ENCODE measurements at regions of chr1 and their contacts with region 1.

Region 1: DNA sequence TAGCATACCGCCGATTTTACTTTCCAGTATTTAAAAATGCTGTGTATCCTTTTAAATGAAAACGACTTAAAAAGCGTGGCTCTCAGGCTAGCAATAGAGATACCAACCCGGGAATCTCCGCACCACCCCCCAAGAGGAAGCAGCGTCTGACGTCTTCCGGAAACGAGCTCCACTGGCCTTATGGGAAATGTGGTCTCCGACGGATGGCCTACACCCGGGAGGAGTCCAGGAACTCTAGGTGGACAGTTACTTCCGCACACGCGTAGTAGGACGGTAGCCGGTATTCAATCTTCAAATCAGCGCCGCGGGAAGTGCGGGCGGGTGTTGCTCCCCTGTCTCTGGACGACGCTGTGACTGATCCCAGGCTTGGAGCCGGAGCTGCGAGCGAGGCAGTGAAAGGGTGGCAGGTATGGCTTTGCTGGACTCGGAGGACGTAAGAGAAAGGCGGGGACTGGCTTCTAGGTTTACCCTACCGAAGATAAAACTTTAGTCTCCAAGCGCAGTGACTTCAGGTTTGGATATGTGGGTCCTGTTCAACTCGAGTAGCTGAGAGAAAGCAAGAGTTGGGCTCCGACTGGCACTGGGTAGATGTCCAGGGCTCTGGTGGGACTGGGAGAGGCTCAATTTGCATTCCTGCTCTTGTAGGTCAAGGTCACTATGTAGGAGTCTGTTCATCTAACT is at the start of gene ZNF684:
- DNase-seq: peak; percentile 57 to 91 (median 82)
- ATAC-seq: peak; percentile 96
- H3K4me3 Mint-ChIP-seq: peak within 1 kb of the TSS; percentile 95 to 99 (median 99)
- H3K27ac Mint-ChIP-seq: peak within 1 kb of the TSS; percentile 89 to 99 (median 96)
- H3K4me1 Mint-ChIP-seq: peaks cover 17 to 29% (median 25%) of the 10 kb centered on the region in 4 donors
- H3K27me3 Mint-ChIP-seq: peaks cover 0 to 14% (median 3%) of the 10 kb centered on the region in 5 donors
- polyA plus RNA-seq, gene ZNF684: 3.7 to 5.2 (median 4.2) TPM

Region 2: GRCh38 chr1:40449684-40450494 is 81.6 kb before region 1 on chr1 and contains the start of gene ZFP69B:
- POLR2A ChIA-PET with region 1: interaction called, 14 read pairs
- DNase-seq: peak; percentile 74 to 89 (median 85)
- ATAC-seq: peak; percentile 77 to 81
- H3K4me3 Mint-ChIP-seq: peak within 1 kb of the TSS; percentile 89 to 96 (median 94)
- H3K27ac Mint-ChIP-seq: peak within 1 kb of the TSS; percentile 88 to 97 (median 94)
- H3K4me1 Mint-ChIP-seq: peaks cover 13 to 31% (median 20%) of the 10 kb centered on the region in 4 donors
- H3K27me3 Mint-ChIP-seq: no peaks in the 10 kb centered on the region
- polyA plus RNA-seq, gene ZFP69B: 1.9 to 4.4 (median 4.3) TPM

Region 3: DNA sequence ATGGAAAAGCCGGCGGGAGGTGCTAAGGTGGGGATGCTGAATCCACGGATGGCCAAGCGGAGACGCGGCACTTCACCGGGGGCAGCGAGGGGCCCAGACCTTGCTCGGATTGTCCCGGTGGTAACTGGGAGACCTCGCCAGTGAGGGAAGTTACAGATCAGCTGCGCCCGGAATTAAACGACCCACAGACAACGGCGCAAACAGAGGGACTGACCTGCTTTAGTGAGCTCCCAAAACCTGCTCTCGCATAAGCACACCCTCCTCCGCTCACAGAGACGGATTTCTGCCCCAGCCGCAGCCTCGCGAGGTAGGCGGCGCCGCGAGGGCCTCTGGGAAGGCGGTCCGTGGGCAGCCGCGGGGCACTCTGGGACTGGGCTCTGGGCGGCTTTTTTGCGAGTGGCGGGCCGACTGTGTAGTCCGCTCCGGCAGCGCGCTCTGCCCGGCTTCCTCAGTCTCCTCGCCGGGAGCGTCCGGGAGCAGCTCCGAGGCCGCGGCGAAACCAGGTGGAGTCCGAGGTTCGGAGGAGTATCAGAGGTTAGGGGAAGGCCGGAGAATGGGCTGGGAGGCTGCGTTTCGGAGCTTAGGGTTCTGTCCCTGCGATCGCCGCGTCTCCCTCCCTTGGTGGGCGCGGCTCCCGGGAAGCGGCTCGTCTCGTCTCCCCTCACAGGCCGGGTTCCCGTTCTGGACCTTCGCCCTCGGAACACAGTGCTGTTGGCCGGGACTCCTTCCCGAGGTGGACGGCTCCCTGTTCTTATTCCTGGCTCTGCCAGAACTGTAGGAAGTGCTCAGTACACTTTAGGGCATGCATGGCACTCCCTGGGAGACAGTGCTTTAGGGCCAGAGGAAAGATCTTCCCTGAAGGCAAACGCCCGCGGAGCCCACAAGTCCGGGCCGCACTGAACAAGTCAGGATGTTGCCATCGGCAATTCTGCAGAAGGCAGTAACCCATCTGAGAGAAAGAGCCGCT is 22.9 kb before region 1 on chr1 and contains the start of gene EXO5:
- POLR2A ChIA-PET with region 1: interaction called, 16 read pairs
- DNase-seq: peak; percentile 57 to 83 (median 74)
- ATAC-seq: peak; percentile 97 to 99
- H3K4me3 Mint-ChIP-seq: peak within 1 kb of the TSS; percentile 84 to 95 (median 89)
- H3K27ac Mint-ChIP-seq: peak within 1 kb of the TSS; percentile 81 to 94 (median 87)
- H3K4me1 Mint-ChIP-seq: peaks cover 11 to 22% (median 12%) of the 10 kb centered on the region in 4 donors
- H3K27me3 Mint-ChIP-seq: no peaks in the 10 kb centered on the region
- polyA plus RNA-seq, gene EXO5: 4.0 to 7.8 (median 4.5) TPM

Region 4: DNA sequence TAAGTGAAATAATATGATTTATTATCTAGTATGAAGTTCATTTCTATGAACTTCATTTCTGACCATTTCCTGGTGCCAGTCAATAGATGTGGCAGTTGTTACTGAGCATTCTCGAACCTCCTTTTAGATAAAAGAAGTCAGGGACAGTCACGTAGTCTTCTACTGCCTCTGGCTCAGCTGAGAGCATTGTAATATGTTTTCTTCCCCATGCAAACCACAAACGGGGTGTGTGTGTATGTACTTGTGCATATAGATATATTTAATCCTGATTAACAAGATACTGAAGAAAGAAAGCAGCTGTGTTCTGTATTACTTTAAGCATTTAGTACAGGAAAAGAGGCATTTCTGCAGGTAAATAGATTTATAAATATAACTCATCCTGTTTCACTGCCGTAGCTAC is 21.5 kb after region 1 on chr1:
- POLR2A ChIA-PET with region 1: no interaction called
- DNase-seq: no peak
- ATAC-seq: no peak
- H3K4me3 Mint-ChIP-seq: no peak overlapping the region
- H3K27ac Mint-ChIP-seq: no peak overlapping the region
- H3K4me1 Mint-ChIP-seq: no peaks in the 10 kb centered on the region
- H3K27me3 Mint-ChIP-seq: peaks cover 0 to 4% (median 1%) of the 10 kb centered on the region in 5 donors

Region 5: GRCh38 chr1:40592107-40592803 is 60.7 kb after region 1 on chr1:
- POLR2A ChIA-PET with region 1: no interaction called
- DNase-seq: peak in 3 of 10 donors; percentile 1 to 9 (median 4)
- ATAC-seq: no peak
- H3K4me3 Mint-ChIP-seq: no peak overlapping the region
- H3K27ac Mint-ChIP-seq: peak overlapping the region in 2 of 10 donors; percentile 23 to 40
- H3K4me1 Mint-ChIP-seq: peaks cover 4 to 10% (median 8%) of the 10 kb centered on the region in 4 donors
- H3K27me3 Mint-ChIP-seq: peaks cover 0 to 5% (median 0%) of the 10 kb centered on the region in 5 donors

Measured in naive thymus-derived CD8-positive, alpha-beta T cell (primary cell).